ENCODE measurements at regions of chrX and their contacts with region 1.

Region 1: GRCh38 chrX:103157496-103158320 is 57.2 kb upstream of the BEX4 start:
- DNase-seq: peak in 1 of 2 experiments; percentile 4
- H3K4me3 ChIP-seq: no peak overlapping the region
- H3K27ac ChIP-seq: no peak overlapping the region
- H3K4me1 ChIP-seq: no peaks in the 10 kb centered on the region
- H3K27me3 ChIP-seq: no peaks in the 10 kb centered on the region
- CTCF ChIP-seq: peak; percentile 78

Region 2: GRCh38 chrX:102934624-102935023 is 223.1 kb before region 1 on chrX:
- CTCF ChIA-PET with region 1: no interaction called
- POLR2A ChIA-PET with region 1: no interaction called
- intact Hi-C with region 1: loop called (anchors 5 kb)
- DNase-seq: peak in 1 of 2 experiments; percentile 20
- H3K4me3 ChIP-seq: no peak overlapping the region
- H3K27ac ChIP-seq: no peak overlapping the region
- H3K4me1 ChIP-seq: no peaks in the 10 kb centered on the region
- H3K27me3 ChIP-seq: no peaks in the 10 kb centered on the region
- CTCF ChIP-seq: peak; percentile 70

Region 3: DNA sequence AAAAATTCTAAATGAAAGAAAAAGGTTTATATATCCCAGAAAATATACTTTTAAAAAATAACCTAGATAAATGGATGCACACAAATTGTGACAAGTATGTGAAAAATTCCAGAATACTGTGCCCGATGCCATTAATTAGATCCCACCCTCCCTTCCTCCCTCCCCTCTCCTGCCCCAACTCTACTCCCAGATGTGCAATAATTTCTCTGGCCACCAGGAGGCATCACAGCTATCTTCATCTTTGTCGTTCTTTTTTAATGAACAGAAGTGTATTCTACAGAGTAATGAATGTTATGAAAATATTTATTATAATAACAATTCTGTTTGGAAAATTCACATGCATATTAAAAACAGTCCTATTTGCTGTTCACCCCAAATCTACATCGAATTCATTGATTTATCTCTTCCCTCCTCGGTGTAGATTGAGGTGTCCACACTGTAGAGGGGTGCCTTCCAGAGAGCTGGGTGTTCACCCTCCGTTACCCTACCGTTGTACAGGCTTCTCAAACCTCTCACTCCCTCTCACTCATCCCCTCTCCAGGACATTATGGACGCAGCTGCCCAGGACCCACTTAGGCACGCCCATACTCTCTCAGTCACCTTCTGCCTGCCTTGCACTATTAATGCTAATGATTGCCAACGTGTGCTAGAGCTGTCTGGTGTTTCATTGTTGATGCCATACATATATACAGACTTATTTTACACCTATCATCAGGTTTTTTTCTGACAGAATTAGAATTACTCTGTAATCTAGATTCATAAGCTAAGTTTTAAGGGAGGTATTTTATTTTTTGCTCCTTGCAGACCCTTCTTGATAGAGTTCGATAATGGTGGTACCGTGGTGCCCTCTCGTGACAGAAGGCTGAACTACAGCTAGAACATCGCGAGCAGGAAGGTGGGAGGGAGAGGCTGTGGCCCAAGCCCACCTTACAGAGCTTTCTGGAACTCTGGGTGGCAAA is 206.5 kb before region 1 on chrX:
- CTCF ChIA-PET with region 1: no interaction called
- POLR2A ChIA-PET with region 1: no interaction called
- intact Hi-C with region 1: loop called (anchors 1 kb)
- DNase-seq: peak in 1 of 2 experiments; percentile 33
- H3K4me3 ChIP-seq: no peak overlapping the region
- H3K27ac ChIP-seq: no peak overlapping the region
- H3K4me1 ChIP-seq: no peaks in the 10 kb centered on the region
- H3K27me3 ChIP-seq: no peaks in the 10 kb centered on the region
- CTCF ChIP-seq: peak; percentile 67

Region 4: GRCh38 chrX:103073445-103073844 is 84.3 kb before region 1 on chrX:
- CTCF ChIA-PET with region 1: no interaction called
- POLR2A ChIA-PET with region 1: no interaction called
- intact Hi-C with region 1: no loop called
- DNase-seq: no peak
- H3K4me3 ChIP-seq: no peak overlapping the region
- H3K27ac ChIP-seq: no peak overlapping the region
- H3K4me1 ChIP-seq: no peaks in the 10 kb centered on the region
- H3K27me3 ChIP-seq: peaks cover 35% of the 10 kb centered on the region
- CTCF ChIP-seq: no peak

Region 5: DNA sequence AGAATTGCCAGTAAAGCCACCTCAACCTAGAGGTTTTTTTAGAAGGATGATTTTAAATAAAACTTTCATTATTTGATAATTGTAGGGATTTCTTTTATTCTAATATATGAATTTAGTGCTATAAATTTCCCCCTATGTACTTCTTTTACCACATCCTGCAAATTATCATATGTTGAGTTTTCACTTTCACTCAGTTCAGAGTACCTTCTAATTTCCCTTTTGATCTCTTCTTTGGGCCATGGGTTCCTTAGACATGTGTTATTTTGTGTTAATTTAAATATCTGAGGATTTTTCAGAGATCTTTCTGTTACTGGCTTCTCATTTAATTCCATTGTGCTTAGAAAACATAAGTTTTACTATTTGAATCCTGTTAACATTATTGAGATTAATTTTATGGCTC is 147.0 kb after region 1 on chrX:
- CTCF ChIA-PET with region 1: no interaction called
- POLR2A ChIA-PET with region 1: no interaction called
- intact Hi-C with region 1: no loop called
- DNase-seq: no peak
- H3K4me3 ChIP-seq: no peak overlapping the region
- H3K27ac ChIP-seq: no peak overlapping the region
- H3K4me1 ChIP-seq: no peaks in the 10 kb centered on the region
- H3K27me3 ChIP-seq: no peaks in the 10 kb centered on the region
- CTCF ChIP-seq: no peak

Region 6: GRCh38 chrX:103343105-103343504 is 185.4 kb after region 1 on chrX:
- CTCF ChIA-PET with region 1: no interaction called
- POLR2A ChIA-PET with region 1: no interaction called
- intact Hi-C with region 1: no loop called
- DNase-seq: peak; percentile 31 to 37
- H3K4me3 ChIP-seq: no peak overlapping the region
- H3K27ac ChIP-seq: no peak overlapping the region
- H3K4me1 ChIP-seq: no peaks in the 10 kb centered on the region
- H3K27me3 ChIP-seq: no peaks in the 10 kb centered on the region
- CTCF ChIP-seq: peak; percentile 79

Region 7: GRCh38 chrX:103396186-103396585 is 238.5 kb after region 1 on chrX:
- CTCF ChIA-PET with region 1: no interaction called
- POLR2A ChIA-PET with region 1: no interaction called
- intact Hi-C with region 1: no loop called
- DNase-seq: no peak
- H3K4me3 ChIP-seq: no peak overlapping the region
- H3K27ac ChIP-seq: no peak overlapping the region
- H3K4me1 ChIP-seq: peaks cover 6% of the 10 kb centered on the region; the same call in 1 of the 2 replicates
- H3K27me3 ChIP-seq: no peaks in the 10 kb centered on the region
- CTCF ChIP-seq: no peak

Measured in PC-9 (cell line).